PC-9 (cell line): ENCODE measurements at regions of chr14 and their contacts with region 1.

Region 1: GRCh38 chr14:57317316-57317715 is 48.5 kb downstream of the AP5M1 start:
- DNase-seq: peak; percentile 50 to 66
- H3K4me3 ChIP-seq: no peak overlapping the region
- H3K27ac ChIP-seq: no peak overlapping the region
- H3K4me1 ChIP-seq: no peaks in the 10 kb centered on the region
- H3K27me3 ChIP-seq: peaks cover 17% of the 10 kb centered on the region
- CTCF ChIP-seq: peak; percentile 87

Region 2: DNA sequence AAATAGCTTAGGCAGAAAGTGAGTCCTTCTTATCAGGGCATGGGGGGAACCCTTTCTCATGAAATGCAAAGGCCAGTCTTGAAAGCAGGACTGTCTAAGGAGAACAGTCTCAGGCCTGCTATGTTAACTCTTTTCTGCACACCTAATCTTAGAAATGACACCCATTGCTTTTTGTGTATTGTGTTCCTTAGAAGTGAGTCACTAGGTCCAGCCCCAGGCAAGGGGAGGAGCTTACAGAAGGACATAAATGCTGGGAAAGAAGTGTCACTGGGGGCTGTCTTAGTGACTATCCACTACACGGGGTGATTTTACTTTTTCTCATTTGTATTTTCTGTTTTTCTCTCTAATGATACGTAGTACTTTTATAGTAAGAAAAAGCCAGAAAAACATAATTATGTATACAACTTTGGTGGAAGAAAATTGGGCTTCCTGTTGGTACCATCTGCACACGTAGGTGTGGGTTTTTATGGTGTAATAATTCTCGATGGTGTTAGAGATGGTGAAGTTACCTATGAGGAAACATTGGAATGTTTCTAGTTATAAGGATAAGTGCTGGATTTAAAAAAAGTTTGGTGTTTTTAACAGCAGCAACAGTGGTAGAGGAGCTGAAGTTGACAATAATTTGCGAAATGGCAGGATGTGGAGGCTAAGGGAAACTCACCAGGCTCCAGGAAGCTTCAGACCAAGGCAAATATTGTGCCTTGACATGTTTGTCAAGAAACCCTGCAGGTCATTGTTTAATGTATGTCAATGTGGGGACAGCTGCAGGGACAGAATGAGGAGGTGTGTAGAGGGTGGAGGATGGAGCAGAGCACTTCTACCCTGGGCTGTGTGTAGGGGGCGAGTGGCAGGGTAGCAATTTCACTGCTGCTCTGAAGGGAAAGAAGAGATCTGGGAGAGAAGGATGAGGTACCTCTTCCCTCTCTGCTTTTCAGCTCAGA is 1522.4 kb before region 1 on chr14:
- CTCF ChIA-PET with region 1: interaction called, 14 read pairs
- POLR2A ChIA-PET with region 1: no interaction called
- intact Hi-C with region 1: no loop called
- DNase-seq: peak; percentile 56 to 63
- H3K4me3 ChIP-seq: no peak overlapping the region
- H3K27ac ChIP-seq: peak overlapping the region; percentile 41
- H3K4me1 ChIP-seq: peaks cover 32% of the 10 kb centered on the region
- H3K27me3 ChIP-seq: no peaks in the 10 kb centered on the region
- CTCF ChIP-seq: no peak

Region 3: GRCh38 chr14:56491299-56492285 is 825.7 kb before region 1 on chr14:
- CTCF ChIA-PET with region 1: no interaction called
- POLR2A ChIA-PET with region 1: no interaction called
- intact Hi-C with region 1: loop called (anchors 1 kb)
- DNase-seq: peak; percentile 27 to 38
- H3K4me3 ChIP-seq: no peak overlapping the region; the same call in 1 of the 2 replicates
- H3K27ac ChIP-seq: no peak overlapping the region
- H3K4me1 ChIP-seq: no peaks in the 10 kb centered on the region
- H3K27me3 ChIP-seq: no peaks in the 10 kb centered on the region
- CTCF ChIP-seq: peak; percentile 78

Region 4: DNA sequence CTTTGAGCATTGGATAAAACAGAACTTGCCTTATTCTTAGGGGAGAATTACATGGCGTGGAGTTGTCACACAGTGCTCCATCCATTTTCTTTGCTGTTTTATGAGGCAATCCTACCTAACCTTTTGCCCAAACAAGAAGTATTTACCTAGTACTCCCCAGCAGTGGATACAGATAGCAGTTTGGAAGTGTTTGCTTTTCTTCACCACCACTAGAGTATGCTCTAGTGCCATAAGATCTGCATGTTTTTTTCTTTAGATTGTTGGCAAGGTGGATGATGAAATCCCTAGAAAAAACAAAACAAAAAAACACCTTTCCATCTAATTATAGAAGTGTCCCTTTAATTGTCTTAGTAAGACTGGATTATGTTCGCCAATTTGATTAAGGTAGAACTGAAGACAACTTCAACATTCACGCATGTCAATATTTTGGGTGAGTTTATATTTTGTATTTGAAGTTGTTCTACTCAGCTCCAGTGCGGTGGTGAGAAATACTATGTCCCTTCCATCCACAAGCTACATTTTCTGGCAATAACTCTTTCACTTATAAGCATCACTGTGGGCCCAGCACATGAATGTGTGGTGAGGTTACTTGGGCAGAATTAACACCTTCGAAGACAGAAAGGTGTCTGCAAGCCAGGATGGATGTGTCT is 761.3 kb before region 1 on chr14:
- CTCF ChIA-PET with region 1: no interaction called
- POLR2A ChIA-PET with region 1: no interaction called
- intact Hi-C with region 1: loop called (anchors 10 kb)
- DNase-seq: peak in 1 of 2 experiments; percentile 71
- H3K4me3 ChIP-seq: no peak overlapping the region
- H3K27ac ChIP-seq: no peak overlapping the region
- H3K4me1 ChIP-seq: peaks cover 10% of the 10 kb centered on the region; the same call in 1 of the 2 replicates
- H3K27me3 ChIP-seq: no peaks in the 10 kb centered on the region
- CTCF ChIP-seq: peak; percentile 80

Region 5: GRCh38 chr14:56659964-56660551 is 657.3 kb before region 1 on chr14:
- CTCF ChIA-PET with region 1: no interaction called
- POLR2A ChIA-PET with region 1: no interaction called
- intact Hi-C with region 1: loop called (anchors 10 kb)
- DNase-seq: peak; percentile 1 to 71
- H3K4me3 ChIP-seq: no peak overlapping the region
- H3K27ac ChIP-seq: no peak overlapping the region
- H3K4me1 ChIP-seq: no peaks in the 10 kb centered on the region
- H3K27me3 ChIP-seq: no peaks in the 10 kb centered on the region
- CTCF ChIP-seq: peak; percentile 82

Region 6: DNA sequence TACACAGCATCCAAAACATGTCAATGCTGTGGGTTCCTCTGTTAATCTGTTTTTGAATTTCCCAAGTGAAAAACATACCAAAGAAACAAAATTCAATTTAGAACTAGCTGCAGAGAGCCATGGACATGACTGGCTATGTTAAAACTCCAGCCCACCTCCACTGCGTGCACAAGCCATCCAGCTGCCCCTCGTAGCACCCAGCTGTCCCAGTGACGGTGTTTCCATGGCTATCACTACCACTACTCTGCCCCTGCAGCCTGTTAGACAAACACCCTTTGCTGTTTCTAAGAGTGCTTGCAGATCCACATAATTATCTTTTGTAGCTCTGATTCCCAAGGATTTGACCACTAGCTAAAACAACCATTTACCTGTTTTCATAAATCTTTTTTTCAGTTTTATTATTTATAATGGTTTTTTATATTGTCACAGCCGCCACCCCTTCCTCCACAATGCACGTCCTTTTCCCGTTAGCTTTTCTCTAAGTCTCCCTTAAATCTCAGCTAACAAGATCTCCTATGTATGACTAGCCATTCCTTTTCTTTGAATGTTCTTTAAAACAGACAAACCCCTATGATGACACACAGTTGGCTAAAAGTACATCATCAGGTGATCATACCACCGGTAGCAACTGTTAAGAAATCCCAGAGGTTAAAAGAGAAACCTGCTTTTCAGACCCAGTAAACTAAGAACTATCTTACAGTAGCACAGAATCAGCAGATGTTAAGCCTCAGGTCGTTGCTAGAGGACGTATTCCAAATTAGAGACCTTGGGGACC is 35.3 kb after region 1 on chr14:
- CTCF ChIA-PET with region 1: no interaction called
- POLR2A ChIA-PET with region 1: no interaction called
- intact Hi-C with region 1: no loop called
- DNase-seq: no peak
- H3K4me3 ChIP-seq: no peak overlapping the region
- H3K27ac ChIP-seq: no peak overlapping the region
- H3K4me1 ChIP-seq: peaks cover 16% of the 10 kb centered on the region
- H3K27me3 ChIP-seq: no peaks in the 10 kb centered on the region
- CTCF ChIP-seq: no peak

Region 7: GRCh38 chr14:57382283-57382682 is 65.0 kb after region 1 on chr14:
- CTCF ChIA-PET with region 1: no interaction called
- POLR2A ChIA-PET with region 1: no interaction called
- intact Hi-C with region 1: loop called (anchors 5 kb)
- DNase-seq: peak in 1 of 2 experiments; percentile 37
- H3K4me3 ChIP-seq: no peak overlapping the region
- H3K27ac ChIP-seq: no peak overlapping the region
- H3K4me1 ChIP-seq: peaks cover 21% of the 10 kb centered on the region
- H3K27me3 ChIP-seq: no peaks in the 10 kb centered on the region
- CTCF ChIP-seq: no peak